Posterior vena cava (tissue), 2 donors: ENCODE measurements at regions of chr17 and their contacts with region 1.

Region 1: GRCh38 chr17:32006957-32007462 is at the start of gene LRRC37B:
- DNase-seq: peak; percentile 96
- total RNA-seq, gene LRRC37B: 9.2 to 15.9 TPM

Region 2: DNA sequence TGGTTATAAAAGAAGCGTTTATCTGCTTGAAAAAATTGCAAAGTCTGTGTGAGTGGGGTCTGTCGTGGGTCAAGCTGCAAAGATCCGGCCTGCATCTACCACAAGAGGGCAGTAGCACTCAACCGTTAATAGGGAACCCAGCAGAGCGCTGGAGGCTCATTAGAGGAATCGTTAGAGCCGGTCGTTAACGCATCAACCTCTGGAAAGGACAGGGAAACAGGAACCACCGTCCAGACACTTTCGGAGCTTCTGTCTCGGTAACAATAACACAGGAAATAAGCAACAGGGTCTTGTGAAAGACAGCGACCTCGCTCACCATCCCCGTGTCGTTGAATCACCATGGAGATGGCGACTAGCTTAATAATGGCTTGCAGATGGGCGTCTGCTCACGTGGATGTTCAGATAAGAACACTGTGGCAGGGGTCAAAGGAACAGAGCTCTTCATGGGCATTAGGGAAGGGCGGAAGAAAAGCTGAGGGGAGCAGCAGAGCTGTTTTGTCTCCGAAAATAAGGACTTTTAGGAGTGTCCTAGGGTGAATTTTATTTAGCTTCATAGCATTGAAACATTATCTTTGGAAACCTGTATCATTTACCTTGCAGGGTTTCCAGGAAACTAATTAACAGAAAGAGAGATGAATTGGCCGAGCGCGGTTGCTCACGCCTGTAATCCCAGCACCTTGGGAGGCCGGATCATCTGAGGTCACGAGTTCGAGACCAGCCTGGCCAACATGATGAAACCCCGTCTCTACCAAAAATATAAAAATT is 1902.3 kb before region 1 on chr17:
- intact Hi-C with region 1: no loop called
- DNase-seq: peak; percentile 89

Region 3: DNA sequence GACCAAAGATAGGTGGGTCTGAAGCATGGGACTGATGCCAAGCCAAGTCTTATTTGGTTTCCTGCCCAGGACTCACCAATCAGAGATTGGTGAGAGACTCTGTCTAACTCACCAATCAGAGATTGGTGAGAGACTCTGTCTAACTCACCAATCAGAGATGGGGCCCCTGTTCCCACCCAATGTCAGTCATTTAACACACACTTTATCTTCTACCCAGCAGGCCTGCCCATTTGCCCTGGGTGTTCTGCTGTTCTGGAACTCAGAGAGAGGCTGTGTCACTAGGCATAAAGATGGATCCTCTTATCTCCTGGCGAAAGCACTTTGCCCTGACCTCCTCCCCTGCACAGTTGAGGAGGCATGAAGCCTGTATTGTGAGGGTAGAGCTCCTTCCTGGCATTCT is 129.8 kb after region 1 on chr17:
- intact Hi-C with region 1: loop called (anchors 5 kb)
- DNase-seq: no peak

Region 4: DNA sequence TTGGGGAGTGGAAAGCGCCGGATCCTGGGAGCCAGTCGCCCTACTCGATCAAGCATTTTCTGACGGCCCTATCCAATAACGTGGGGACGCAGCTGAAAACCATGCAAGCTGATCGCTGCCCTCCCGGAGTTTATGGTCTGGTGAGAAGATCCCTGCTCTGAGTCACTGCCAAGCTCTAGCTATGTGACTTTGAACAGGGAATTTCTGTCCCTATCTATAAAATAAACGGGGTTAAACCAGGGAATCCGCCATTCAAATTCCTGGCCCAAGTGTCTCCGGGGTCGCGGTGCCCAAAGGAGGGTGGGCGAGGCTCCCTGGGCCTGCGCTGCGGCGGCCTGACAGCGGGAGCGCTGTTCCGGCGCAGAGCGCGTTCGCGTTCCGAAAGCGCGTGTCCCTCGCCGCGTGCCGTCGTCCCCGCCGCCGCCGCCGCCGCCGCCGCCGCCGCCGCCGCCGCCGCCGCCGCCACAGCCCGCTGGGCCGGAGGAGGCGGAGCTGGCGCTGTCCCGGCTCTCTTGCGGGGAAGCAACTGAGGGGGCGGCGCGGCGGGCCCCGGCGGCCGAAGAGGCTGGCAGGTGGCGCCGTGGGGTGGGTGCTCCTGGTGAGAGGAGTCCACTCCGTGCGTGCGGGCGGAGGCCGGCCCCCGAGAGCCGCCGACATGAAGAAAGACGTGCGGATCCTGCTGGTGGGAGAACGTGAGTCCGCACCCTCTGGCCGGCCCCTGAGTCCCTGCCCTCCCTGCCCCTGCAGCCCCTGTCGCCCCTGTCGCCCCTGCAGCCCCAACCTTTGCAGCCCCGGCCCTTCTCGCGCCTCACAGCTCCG is 135.2 kb after region 1 on chr17 and contains the start of gene RHOT1:
- intact Hi-C with region 1: loop called (anchors 5 kb)
- DNase-seq: peak; percentile 92
- total RNA-seq, gene RHOT1: 37.9 to 45.6 TPM